ENCODE measurements at regions of chr6 and their contacts with region 1.

Region 1: DNA sequence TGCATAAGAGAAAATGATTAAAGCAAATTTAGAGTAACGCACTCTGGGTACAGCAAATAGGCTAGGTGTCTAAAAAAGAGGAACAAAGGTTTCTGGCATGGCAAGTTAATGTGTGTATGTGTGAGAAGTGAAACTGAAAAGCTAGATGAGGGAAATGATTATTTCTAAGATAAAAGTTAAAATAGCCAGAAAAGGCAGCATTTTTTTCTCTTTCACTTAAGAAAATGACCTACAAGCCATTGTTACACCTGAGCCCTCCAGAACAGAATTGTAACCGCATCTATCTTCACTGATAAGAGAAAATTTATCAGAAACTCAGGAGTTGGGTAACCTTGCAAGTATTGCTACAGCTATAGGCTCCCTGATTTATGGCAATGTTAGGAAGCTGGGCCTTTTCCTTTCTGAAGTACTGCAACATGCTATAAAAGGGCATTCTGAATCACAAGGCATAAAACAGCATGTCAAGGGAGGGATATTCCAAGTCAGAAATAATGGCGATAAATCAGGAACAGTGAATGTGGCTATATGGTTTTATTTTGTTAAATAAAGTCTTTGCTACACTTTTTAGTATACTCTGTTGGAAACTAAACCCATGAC is 395.3 kb downstream of the TBC1D32 start:
- DNase-seq: no peak
- ATAC-seq: peak; percentile 86
- H3K4me3 Mint-ChIP-seq: no peak overlapping the region
- H3K27ac Mint-ChIP-seq: peak overlapping the region; percentile 31
- H3K4me1 Mint-ChIP-seq: peaks cover 29% of the 10 kb centered on the region
- H3K27me3 Mint-ChIP-seq: no peaks in the 10 kb centered on the region
- CTCF ChIP-seq: no peak

Region 2: GRCh38 chr6:120876424-120876823 is 62.5 kb before region 1 on chr6:
- CTCF ChIA-PET with region 1: no interaction called
- POLR2A ChIA-PET with region 1: no interaction called
- intact Hi-C with region 1: loop called (anchors 2 kb)
- DNase-seq: no peak
- ATAC-seq: no peak
- H3K4me3 Mint-ChIP-seq: peak overlapping the region; percentile 17
- H3K27ac Mint-ChIP-seq: peak overlapping the region; percentile 69
- H3K4me1 Mint-ChIP-seq: peaks cover 26% of the 10 kb centered on the region
- H3K27me3 Mint-ChIP-seq: no peaks in the 10 kb centered on the region
- CTCF ChIP-seq: no peak

Region 3: GRCh38 chr6:121334299-121335086 is 395.5 kb after region 1 on chr6 and contains the start of gene TBC1D32:
- CTCF ChIA-PET with region 1: no interaction called
- POLR2A ChIA-PET with region 1: no interaction called
- intact Hi-C with region 1: loop called (anchors 5 kb)
- DNase-seq: peak; percentile 88
- ATAC-seq: peak; percentile 89
- H3K4me3 Mint-ChIP-seq: peak within 1 kb of the TSS; percentile 94
- H3K27ac Mint-ChIP-seq: peak within 1 kb of the TSS; percentile 96
- H3K4me1 Mint-ChIP-seq: peaks cover 31% of the 10 kb centered on the region
- H3K27me3 Mint-ChIP-seq: no peaks in the 10 kb centered on the region
- CTCF ChIP-seq: no peak
- total RNA-seq, gene TBC1D32: 11.3 and 17.8 TPM in 2 replicates

Region 4: DNA sequence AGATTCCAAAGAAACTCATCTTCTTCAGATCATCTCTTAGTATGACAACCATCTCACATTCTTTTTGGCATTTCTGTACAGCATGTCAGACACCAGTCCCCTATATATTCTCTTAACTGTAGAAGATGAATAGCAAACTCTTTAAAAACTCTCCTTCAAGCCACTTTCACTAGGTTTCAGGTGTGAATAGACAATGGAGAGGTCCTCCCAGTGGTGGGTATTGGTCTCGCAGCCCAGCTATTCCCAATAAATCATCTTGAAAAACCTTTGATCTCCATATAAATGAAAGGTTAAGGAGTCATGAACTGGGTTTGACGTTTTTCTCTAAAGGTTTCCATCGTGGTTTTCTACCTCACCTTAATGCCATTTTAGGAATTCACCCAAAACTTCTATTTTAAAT is 676.5 kb after region 1 on chr6:
- CTCF ChIA-PET with region 1: no interaction called
- POLR2A ChIA-PET with region 1: no interaction called
- intact Hi-C with region 1: no loop called
- DNase-seq: no peak
- ATAC-seq: no peak
- H3K4me3 Mint-ChIP-seq: no peak overlapping the region
- H3K27ac Mint-ChIP-seq: no peak overlapping the region
- H3K4me1 Mint-ChIP-seq: no peaks in the 10 kb centered on the region
- H3K27me3 Mint-ChIP-seq: no peaks in the 10 kb centered on the region
- CTCF ChIP-seq: no peak

Measured in activated B cell treated with CpG ODN at 0.5 μM for 24 hours (primary cell).